PC-3 (cell line): ENCODE measurements at regions of chr1 and their contacts with region 1.

Region 1: GRCh38 chr1:78237364-78237916 is 191.7 kb downstream of the GIPC2 start:
- DNase-seq: peak; percentile 98
- ATAC-seq: peak; percentile 97
- H3K4me3 ChIP-seq: no peak overlapping the region
- H3K27ac ChIP-seq: peak overlapping the region; percentile 89
- H3K4me1 ChIP-seq: peaks cover 38% of the 10 kb centered on the region
- H3K27me3 ChIP-seq: no peaks in the 10 kb centered on the region
- CTCF ChIP-seq: no peak

Region 2: GRCh38 chr1:77583483-77583882 is 654.0 kb before region 1 on chr1:
- CTCF ChIA-PET with region 1: no interaction called
- POLR2A ChIA-PET with region 1: no interaction called
- intact Hi-C with region 1: no loop called
- DNase-seq: no peak
- ATAC-seq: no peak
- H3K4me3 ChIP-seq: no peak overlapping the region
- H3K27ac ChIP-seq: no peak overlapping the region
- H3K4me1 ChIP-seq: no peaks in the 10 kb centered on the region
- H3K27me3 ChIP-seq: no peaks in the 10 kb centered on the region
- CTCF ChIP-seq: no peak

Region 3: DNA sequence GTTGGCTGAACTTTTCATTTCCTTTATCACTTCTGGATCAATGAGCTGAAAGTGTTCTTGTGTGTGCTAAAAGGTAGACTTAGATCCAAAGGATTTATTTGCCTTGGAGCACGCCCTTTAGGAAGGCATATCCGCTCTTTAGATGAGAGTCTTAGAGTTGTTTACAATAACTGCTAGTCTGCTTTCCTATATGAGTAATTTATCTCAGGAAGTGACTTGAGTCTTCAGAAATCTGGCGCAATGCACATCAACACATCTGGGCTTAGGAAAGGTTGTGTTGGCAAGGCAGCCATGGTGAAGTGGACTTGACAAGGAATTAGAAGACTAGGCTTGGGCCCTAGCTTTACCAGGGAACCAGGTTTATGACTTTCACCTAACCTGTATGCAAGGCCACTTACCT is 49.2 kb after region 1 on chr1:
- CTCF ChIA-PET with region 1: no interaction called
- POLR2A ChIA-PET with region 1: no interaction called
- intact Hi-C with region 1: loop called (anchors 1 kb)
- DNase-seq: peak; percentile 84
- ATAC-seq: peak; percentile 94
- H3K4me3 ChIP-seq: no peak overlapping the region
- H3K27ac ChIP-seq: peak overlapping the region; percentile 84
- H3K4me1 ChIP-seq: peaks cover 11% of the 10 kb centered on the region
- H3K27me3 ChIP-seq: no peaks in the 10 kb centered on the region
- CTCF ChIP-seq: no peak